PC-3 (cell line): ENCODE measurements at regions of chr1 and their contacts with region 1.

Region 1: DNA sequence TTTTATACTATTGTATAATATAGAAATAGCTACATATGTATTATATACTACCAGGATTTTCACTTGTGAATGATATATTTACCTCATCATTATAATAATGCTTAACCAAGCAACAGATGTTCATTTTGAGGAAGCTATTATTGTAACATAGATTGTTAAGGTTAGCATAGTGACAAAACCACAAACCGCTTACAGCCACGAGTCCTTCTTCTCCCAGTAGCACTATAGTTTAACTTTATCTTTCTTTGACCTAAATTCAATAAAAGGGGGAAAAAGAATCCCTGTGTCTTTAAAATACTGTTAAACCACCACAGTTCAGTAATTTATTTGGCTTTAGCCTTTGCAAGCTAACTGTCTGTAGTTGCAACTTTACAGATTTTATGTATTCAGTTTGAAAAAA is 1039.4 kb upstream of the B3GALT2 start:
- DNase-seq: no peak
- ATAC-seq: no peak
- H3K4me3 ChIP-seq: no peak overlapping the region
- H3K27ac ChIP-seq: no peak overlapping the region
- H3K4me1 ChIP-seq: peaks cover 14% of the 10 kb centered on the region
- H3K27me3 ChIP-seq: no peaks in the 10 kb centered on the region
- CTCF ChIP-seq: no peak

Region 2: DNA sequence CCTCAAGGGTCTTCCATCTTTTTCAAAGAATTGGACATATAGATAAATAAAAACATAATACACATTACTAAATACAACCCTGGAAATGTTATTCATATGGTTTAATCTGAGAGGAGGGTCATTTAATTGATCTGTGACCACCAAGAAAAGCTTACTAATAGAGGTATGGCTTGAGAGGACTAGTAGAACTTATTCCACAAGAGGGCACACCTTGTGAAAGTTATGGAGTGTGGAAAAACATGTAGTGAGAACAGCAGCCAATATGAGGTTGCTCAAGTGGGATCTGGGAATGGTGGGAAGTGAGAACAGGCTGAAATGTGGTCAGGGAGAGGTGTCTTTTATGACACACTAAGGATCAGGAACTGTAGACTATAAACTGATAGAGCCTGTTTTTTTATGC is 65.9 kb before region 1 on chr1:
- CTCF ChIA-PET with region 1: no interaction called
- POLR2A ChIA-PET with region 1: no interaction called
- intact Hi-C with region 1: no loop called
- DNase-seq: peak; percentile 17
- ATAC-seq: peak; percentile 37; the same call in 1 of the 2 replicates
- H3K4me3 ChIP-seq: no peak overlapping the region
- H3K27ac ChIP-seq: no peak overlapping the region
- H3K4me1 ChIP-seq: no peaks in the 10 kb centered on the region
- H3K27me3 ChIP-seq: no peaks in the 10 kb centered on the region
- CTCF ChIP-seq: peak; percentile 45; the same call in 1 of the 2 replicates

Region 3: GRCh38 chr1:194369060-194369459 is 143.2 kb after region 1 on chr1:
- CTCF ChIA-PET with region 1: no interaction called
- POLR2A ChIA-PET with region 1: no interaction called
- intact Hi-C with region 1: loop called (anchors 5 kb)
- DNase-seq: no peak
- ATAC-seq: no peak
- H3K4me3 ChIP-seq: no peak overlapping the region
- H3K27ac ChIP-seq: no peak overlapping the region
- H3K4me1 ChIP-seq: peaks cover 16% of the 10 kb centered on the region
- H3K27me3 ChIP-seq: no peaks in the 10 kb centered on the region
- CTCF ChIP-seq: no peak